Adrenal gland (tissue), 19 donors: ENCODE measurements at regions of chr5 and their contacts with region 1.

Region 1: GRCh38 chr5:132947671-132948070 is 15.8 kb downstream of the AFF4 start:
- DNase-seq: no peak
- H3K4me3 ChIP-seq: no peak overlapping the region
- H3K27ac ChIP-seq: no peak overlapping the region
- H3K4me1 ChIP-seq: peaks cover 4 to 41% of the 10 kb centered on the region in 2 donors
- H3K27me3 ChIP-seq: no peaks in the 10 kb centered on the region
- CTCF ChIP-seq: no peak
- POLR2A ChIP-seq: no peak

Region 2: DNA sequence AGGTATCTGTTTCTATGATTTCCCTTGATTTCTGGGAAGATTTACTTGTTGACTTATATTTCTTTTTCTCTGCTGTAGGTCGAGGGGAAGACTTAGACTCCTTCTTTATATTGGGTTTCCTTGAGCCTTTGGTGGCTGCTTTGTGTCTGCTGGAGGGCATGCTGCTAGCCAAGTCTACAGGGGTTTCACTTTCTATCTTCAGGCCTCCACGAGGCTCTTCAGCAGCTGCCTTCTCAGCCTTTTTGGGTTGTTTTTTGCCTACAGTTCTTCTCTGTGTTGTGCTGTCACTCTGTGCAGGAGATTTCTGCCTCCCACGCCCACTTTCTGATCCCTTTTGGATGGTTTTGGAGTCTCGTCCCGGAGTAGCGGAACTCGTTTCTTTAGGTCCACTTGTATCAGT is 51.0 kb before region 1 on chr5:
- intact Hi-C with region 1: loop called in 1 of 2 experiments (anchors 10 kb)
- DNase-seq: no peak
- H3K4me3 ChIP-seq: no peak overlapping the region
- H3K27ac ChIP-seq: peak overlapping the region in 3 of 5 donors; percentile 48 to 59 (median 50)
- H3K4me1 ChIP-seq: peaks cover 17 to 30% of the 10 kb centered on the region in 2 donors
- H3K27me3 ChIP-seq: no peaks in the 10 kb centered on the region
- CTCF ChIP-seq: no peak
- POLR2A ChIP-seq: no peak

Region 3: GRCh38 chr5:132907161-132907560 is 40.5 kb before region 1 on chr5:
- intact Hi-C with region 1: no loop called
- DNase-seq: no peak
- H3K4me3 ChIP-seq: no peak overlapping the region
- H3K27ac ChIP-seq: peak overlapping the region in 1 of 5 donors; percentile 1
- H3K4me1 ChIP-seq: peaks cover 0 to 5% of the 10 kb centered on the region in 2 donors
- H3K27me3 ChIP-seq: no peaks in the 10 kb centered on the region
- CTCF ChIP-seq: no peak
- POLR2A ChIP-seq: no peak